ENCODE measurements at regions of chr1 and their contacts with region 1.

Region 1: GRCh38 chr1:202315576-202316168 is 26.1 kb downstream of the UBE2T start:
- DNase-seq: peak; percentile 79
- H3K4me3 ChIP-seq: no peak overlapping the region
- H3K27ac ChIP-seq: no peak overlapping the region
- H3K4me1 ChIP-seq: peaks cover 9% of the 10 kb centered on the region
- H3K27me3 ChIP-seq: no peaks in the 10 kb centered on the region
- CTCF ChIP-seq: peak; percentile 95 to 98
- POLR2A ChIP-seq: no peak

Region 2: GRCh38 chr1:202192770-202193613 is 122.7 kb before region 1 on chr1:
- CTCF ChIA-PET with region 1: interaction called, 121 read pairs
- POLR2A ChIA-PET with region 1: no interaction called
- dilution Hi-C with region 1: no loop called
- intact Hi-C with region 1: loop called (anchors 1 kb)
- DNase-seq: peak; percentile 49
- H3K4me3 ChIP-seq: no peak overlapping the region
- H3K27ac ChIP-seq: no peak overlapping the region
- H3K4me1 ChIP-seq: no peaks in the 10 kb centered on the region
- H3K27me3 ChIP-seq: peaks cover 32 to 33% of the 10 kb centered on the region in 2 experiments
- CTCF ChIP-seq: peak; percentile 87 to 93
- POLR2A ChIP-seq: no peak

Region 3: DNA sequence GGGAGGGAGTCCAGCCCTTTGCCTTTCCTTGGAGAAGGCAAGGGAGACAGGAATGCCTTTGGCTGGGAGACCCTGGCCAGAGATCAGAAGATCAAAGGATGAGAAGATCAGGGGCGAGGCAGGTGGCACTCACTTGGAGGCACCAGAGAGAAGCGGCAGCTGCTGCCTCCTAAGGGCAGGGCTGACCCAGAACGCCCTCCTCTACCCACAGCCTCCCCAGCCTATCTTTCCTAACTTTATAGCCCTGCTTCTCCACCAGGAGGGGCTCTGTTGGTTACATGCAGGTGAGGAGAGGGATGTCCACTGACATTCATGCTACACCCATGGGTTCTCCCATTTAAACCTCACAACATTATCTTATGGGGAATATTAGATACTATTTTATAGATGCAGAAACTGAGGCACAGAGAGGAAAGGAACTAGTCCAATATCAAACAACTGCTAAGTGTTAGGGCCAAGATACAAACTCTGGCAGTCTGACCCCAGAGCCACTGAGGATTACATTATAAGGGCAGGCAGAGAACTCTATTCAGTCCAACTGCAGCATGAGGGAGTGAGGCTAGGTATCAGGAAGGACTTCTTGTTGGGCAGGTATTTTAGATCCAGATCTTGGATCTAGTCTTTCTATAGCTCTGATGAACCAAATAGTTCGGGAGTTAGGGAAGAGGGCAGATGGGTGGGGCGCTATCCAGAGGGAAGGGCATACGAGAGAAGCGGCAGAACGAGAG is 102.1 kb before region 1 on chr1:
- CTCF ChIA-PET with region 1: interaction called, 9 read pairs
- POLR2A ChIA-PET with region 1: no interaction called
- dilution Hi-C with region 1: loop called (anchors 25 kb)
- intact Hi-C with region 1: loop called (anchors 1 kb)
- DNase-seq: no peak
- H3K4me3 ChIP-seq: no peak overlapping the region
- H3K27ac ChIP-seq: no peak overlapping the region
- H3K4me1 ChIP-seq: peaks cover 2% of the 10 kb centered on the region
- H3K27me3 ChIP-seq: peaks cover 41 to 53% of the 10 kb centered on the region in 2 experiments
- CTCF ChIP-seq: peak in 1 of 2 donors; percentile 12
- POLR2A ChIP-seq: no peak

Region 4: DNA sequence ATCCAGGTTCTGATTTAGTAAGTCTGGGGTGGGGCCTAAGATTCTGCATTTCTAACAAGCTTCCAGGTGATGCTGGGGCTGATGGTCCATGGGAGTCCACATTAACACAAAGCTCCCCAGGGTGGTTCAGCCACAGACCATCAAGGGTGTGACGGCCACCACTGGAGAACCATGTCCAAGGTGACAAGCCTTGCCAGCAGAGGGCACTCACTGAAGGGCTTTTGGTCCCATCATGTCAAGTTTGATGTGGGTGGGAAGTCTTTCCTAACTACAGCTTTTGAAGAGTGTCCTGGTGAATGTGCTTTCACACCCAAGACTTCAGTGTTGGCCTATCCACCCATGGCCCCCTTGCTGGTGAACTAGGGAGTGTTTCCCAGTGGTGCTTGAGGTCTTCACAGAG is 41.1 kb before region 1 on chr1:
- CTCF ChIA-PET with region 1: interaction called, 117 read pairs
- POLR2A ChIA-PET with region 1: no interaction called
- dilution Hi-C with region 1: no loop called
- intact Hi-C with region 1: loop called (anchors 1 kb)
- DNase-seq: peak; percentile 48
- H3K4me3 ChIP-seq: no peak overlapping the region
- H3K27ac ChIP-seq: no peak overlapping the region
- H3K4me1 ChIP-seq: peaks cover 9% of the 10 kb centered on the region
- H3K27me3 ChIP-seq: peaks cover 4% of the 10 kb centered on the region in 2 experiments
- CTCF ChIP-seq: peak; percentile 69 to 74
- POLR2A ChIP-seq: no peak

Region 5: DNA sequence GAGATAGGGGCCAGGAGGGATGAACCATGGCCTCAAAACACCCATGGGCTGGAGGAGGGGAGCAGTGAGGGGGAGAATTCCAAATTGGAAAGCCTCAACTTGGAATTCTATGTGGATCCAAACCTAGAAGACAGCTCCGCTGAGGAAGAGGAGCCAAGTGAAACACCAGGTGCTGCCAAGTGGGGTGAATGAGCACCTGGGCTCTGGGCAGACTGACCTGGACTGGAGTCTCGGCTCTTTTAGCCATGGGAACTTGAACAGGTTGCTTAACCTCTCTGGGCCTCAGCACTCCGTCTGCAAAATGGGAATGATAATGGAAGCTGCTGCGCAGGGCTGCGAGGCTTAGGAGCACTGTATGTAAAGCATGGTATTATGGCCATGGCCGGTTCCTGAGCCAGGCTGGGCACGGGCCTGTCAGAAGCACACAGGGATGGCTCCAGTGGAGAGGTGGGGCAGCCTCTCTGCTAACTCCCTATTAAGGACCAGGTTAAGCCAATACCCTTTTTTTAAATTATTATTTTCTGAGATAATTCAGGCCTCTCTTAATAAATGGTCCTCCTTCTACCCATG is 313.1 kb after region 1 on chr1:
- CTCF ChIA-PET with region 1: no interaction called
- POLR2A ChIA-PET with region 1: no interaction called
- dilution Hi-C with region 1: no loop called
- intact Hi-C with region 1: no loop called
- DNase-seq: no peak
- H3K4me3 ChIP-seq: no peak overlapping the region
- H3K27ac ChIP-seq: no peak overlapping the region
- H3K4me1 ChIP-seq: no peaks in the 10 kb centered on the region
- H3K27me3 ChIP-seq: peaks cover 0 to 3% of the 10 kb centered on the region in 2 experiments
- CTCF ChIP-seq: no peak
- POLR2A ChIP-seq: no peak

Measured in endothelial cell of umbilical vein (primary cell).